GM12878 (cell line): ENCODE measurements at regions of chr20 and their contacts with region 1.

Region 1: GRCh38 chr20:44210422-44211176 is at the start of gene OSER1:
- DNase-seq: peak; percentile 88
- ATAC-seq: peak; percentile 88
- H3K4me3 ChIP-seq: peak within 1 kb of the TSS; percentile 98
- H3K27ac ChIP-seq: peak within 1 kb of the TSS; percentile 89
- H3K4me1 ChIP-seq: peaks cover 4% of the 10 kb centered on the region; the same call in 1 of the 2 replicates
- H3K27me3 ChIP-seq: no peaks in the 10 kb centered on the region
- CTCF ChIP-seq: no peak
- EP300 ChIP-seq: 0 out of 4 replicates have a peak, but pooled peaks have one; percentile 27 to 44
- POLR2A ChIP-seq: peak; percentile 80
- RAD21 ChIP-seq: no peak
- polyA plus RNA-seq, gene OSER1: 50.3 to 63.8 TPM

Region 2: GRCh38 chr20:44310664-44311639 is 100.4 kb after region 1 on chr20 and contains the start of gene FITM2:
- CTCF ChIA-PET with region 1: interaction called, 257 read pairs
- POLR2A ChIA-PET with region 1: no interaction called
- RAD21 ChIA-PET with region 1: interaction called, 73 read pairs
- SMC1A ChIA-PET with region 1: interaction called, 118 read pairs
- in situ Hi-C with region 1: loop called (anchors 5 kb)
- intact Hi-C with region 1: loop called (anchors 1 kb)
- DNase-seq: peak; percentile 84
- ATAC-seq: peak; percentile 96
- H3K4me3 ChIP-seq: peak within 1 kb of the TSS; percentile 90
- H3K27ac ChIP-seq: peak within 1 kb of the TSS; percentile 57
- H3K4me1 ChIP-seq: no peaks in the 10 kb centered on the region
- H3K27me3 ChIP-seq: no peaks in the 10 kb centered on the region
- CTCF ChIP-seq: peak; percentile 95 to 99 (median 96); a peak in 5 of 6 replicates
- EP300 ChIP-seq: no peak
- POLR2A ChIP-seq: peak; percentile 80
- RAD21 ChIP-seq: peak; percentile 80
- polyA plus RNA-seq, gene FITM2: 0.46 to 0.61 TPM